ENCODE measurements at regions of chr10 and their contacts with region 1.

Region 1: GRCh38 chr10:104349623-104350126 is 4.0 kb upstream of the CFAP58 start:
- DNase-seq: no peak

Region 2: GRCh38 chr10:104291439-104291951 is 58.2 kb before region 1 on chr10:
- in situ Hi-C with region 1: loop called (anchors 10 kb)
- DNase-seq: peak; percentile 93

Region 3: GRCh38 chr10:106038246-106038645 is 1688.6 kb after region 1 on chr10:
- in situ Hi-C with region 1: no loop called
- DNase-seq: no peak

Measured in KBM-7 (cell line).